ENCODE measurements at regions of chr22 and their contacts with region 1.

Region 1: DNA sequence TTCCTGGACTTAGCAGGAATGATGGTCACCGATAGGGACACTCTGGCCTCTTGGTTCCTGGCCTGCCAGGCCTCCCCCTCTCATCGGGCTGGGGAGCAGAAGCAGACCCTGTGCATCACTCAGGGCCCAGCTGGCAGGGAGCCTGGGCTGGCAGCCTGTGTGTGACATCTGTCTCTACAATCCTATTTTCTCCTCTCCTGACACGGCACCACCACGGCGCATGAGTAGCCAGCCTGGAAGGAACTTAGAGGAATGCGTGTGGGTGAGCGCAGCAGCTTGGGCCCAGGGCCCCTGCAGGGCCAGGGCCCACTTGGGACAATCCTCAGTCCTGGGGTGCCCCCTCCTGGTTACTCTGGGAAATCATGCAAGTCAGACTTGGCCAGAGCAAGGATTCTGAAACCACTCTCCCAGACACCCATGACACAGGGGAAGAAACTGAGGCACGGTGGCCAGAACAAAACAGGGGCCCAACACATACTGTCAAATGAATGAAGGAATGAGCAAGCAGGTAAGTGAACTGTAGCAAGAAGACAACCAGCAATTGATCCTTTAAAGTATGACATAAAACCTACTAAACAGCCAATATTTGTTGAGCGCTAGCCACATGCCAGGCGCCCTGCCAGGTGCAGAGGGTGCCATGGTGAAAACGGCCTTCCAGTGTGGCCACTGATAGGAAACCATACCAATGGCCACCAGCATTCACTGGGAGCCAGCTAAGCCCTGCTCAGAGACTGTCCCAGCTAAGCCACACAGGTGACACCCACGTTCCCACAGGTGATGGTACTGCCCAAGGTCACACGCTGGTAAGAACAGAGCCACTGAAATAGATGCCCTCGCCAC is 13.3 kb downstream of the RSPH14 start:
- DNase-seq: peak; percentile 79
- H3K4me3 ChIP-seq: no peak overlapping the region
- H3K27ac ChIP-seq: no peak overlapping the region
- H3K4me1 ChIP-seq: peaks cover 0 to 3% (median 0%) of the 10 kb centered on the region in 4 donors
- H3K27me3 ChIP-seq: no peaks in the 10 kb centered on the region
- CTCF ChIP-seq: peak; percentile 72 to 83 (median 78)
- EP300 ChIP-seq: no peak
- POLR2A ChIP-seq: no peak

Region 2: GRCh38 chr22:22587577-22588188 is 540.8 kb before region 1 on chr22:
- in situ Hi-C with region 1: no loop called
- intact Hi-C with region 1: loop called (anchors 5 kb)
- DNase-seq: no peak
- H3K4me3 ChIP-seq: no peak overlapping the region
- H3K27ac ChIP-seq: no peak overlapping the region
- H3K4me1 ChIP-seq: no peaks in the 10 kb centered on the region
- H3K27me3 ChIP-seq: peaks cover 27% of the 10 kb centered on the region
- CTCF ChIP-seq: no peak
- EP300 ChIP-seq: no peak
- POLR2A ChIP-seq: no peak

Region 3: DNA sequence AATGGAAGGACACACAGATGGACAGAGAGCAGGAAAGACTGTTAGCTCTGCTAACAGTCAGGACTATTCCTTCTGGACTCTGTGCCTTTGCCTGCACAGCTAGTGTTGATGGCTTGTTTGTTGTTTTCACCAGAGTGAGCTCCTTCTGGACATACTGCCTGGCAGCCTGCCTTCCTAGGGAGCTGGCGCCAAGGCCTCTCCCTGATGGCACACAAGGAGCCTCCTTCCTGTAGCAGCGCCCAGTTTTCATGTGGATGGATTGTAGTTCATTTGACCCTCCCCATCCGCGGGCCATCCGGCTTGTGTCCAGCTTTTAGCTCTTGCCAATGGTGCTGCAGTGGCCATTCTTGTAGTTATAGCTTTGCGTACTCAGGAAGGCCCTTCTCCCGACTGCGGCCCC is 35.2 kb after region 1 on chr22:
- in situ Hi-C with region 1: no loop called
- intact Hi-C with region 1: no loop called
- DNase-seq: peak; percentile 64
- H3K4me3 ChIP-seq: no peak overlapping the region
- H3K27ac ChIP-seq: peak overlapping the region in 3 of 4 donors; percentile 10 to 43 (median 11)
- H3K4me1 ChIP-seq: peaks cover 3 to 16% (median 6%) of the 10 kb centered on the region in 4 donors
- H3K27me3 ChIP-seq: no peaks in the 10 kb centered on the region
- CTCF ChIP-seq: no peak
- EP300 ChIP-seq: no peak
- POLR2A ChIP-seq: no peak

Region 4: DNA sequence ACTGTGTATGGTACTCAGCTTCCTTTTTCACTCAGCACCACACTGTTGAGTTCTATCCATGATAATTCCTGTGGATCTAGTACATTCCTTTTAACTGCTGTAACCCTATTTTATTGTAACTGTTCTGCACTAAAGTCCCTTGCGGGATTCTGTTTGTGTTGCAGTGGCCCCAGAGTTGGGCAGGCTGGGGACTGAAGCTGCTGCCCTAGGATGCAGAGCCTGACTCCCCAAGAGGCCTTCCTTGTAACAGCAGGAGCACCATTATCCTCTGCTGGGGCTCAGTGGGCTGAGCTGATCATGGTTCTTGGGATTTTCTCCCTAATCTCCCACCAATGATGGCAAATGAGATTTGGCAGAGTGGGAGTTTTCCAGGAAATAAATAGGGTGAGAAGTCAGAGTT is 960.3 kb after region 1 on chr22:
- in situ Hi-C with region 1: no loop called
- intact Hi-C with region 1: no loop called
- DNase-seq: no peak
- H3K4me3 ChIP-seq: no peak overlapping the region
- H3K27ac ChIP-seq: no peak overlapping the region
- H3K4me1 ChIP-seq: no peaks in the 10 kb centered on the region
- H3K27me3 ChIP-seq: no peaks in the 10 kb centered on the region
- CTCF ChIP-seq: no peak
- EP300 ChIP-seq: no peak
- POLR2A ChIP-seq: no peak